ENCODE measurements at regions of chr18 and their contacts with region 1.

Region 1: GRCh38 chr18:47204908-47205522 is 28.9 kb upstream of the IER3IP1 start:
- DNase-seq: peak; percentile 51
- ATAC-seq: no peak
- H3K4me3 ChIP-seq: no peak overlapping the region
- H3K4me3 Mint-ChIP-seq: no peak overlapping the region
- H3K27ac ChIP-seq: no peak overlapping the region
- H3K27ac Mint-ChIP-seq: no peak overlapping the region
- H3K4me1 ChIP-seq: no peaks in the 10 kb centered on the region
- H3K4me1 Mint-ChIP-seq: no peaks in the 10 kb centered on the region
- H3K27me3 ChIP-seq: peaks cover 0 to under 1% (median 0%) of the 10 kb centered on the region in 4 experiments
- H3K27me3 Mint-ChIP-seq: peaks cover 33% of the 10 kb centered on the region
- CTCF ChIP-seq: peak; percentile 76

Region 2: DNA sequence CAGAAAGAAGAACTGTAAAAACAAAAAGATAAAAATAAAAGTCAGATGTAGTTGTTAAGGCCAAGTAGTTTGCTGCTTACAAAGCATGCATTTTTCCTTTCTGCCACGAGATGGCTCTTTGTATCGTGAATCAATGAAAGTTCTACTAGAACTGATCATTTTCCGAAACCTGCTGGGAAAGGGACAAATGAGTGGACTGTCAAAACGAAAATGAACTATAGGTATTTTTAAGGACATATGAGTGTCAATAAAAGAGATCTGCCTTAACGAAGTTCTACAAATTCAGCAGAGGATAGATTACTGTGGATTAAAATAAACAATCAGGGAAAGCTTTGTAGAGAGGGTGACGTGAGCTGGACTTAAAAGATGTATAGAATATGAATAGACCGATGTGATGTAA is 154.5 kb before region 1 on chr18:
- CTCF ChIA-PET with region 1: interaction called, 26 read pairs
- POLR2A ChIA-PET with region 1: no interaction called
- intact Hi-C with region 1: no loop called
- DNase-seq: peak; percentile 32
- ATAC-seq: no peak
- H3K4me3 ChIP-seq: no peak overlapping the region
- H3K4me3 Mint-ChIP-seq: no peak overlapping the region
- H3K27ac ChIP-seq: no peak overlapping the region
- H3K27ac Mint-ChIP-seq: no peak overlapping the region
- H3K4me1 ChIP-seq: no peaks in the 10 kb centered on the region
- H3K4me1 Mint-ChIP-seq: no peaks in the 10 kb centered on the region
- H3K27me3 ChIP-seq: no peaks in the 10 kb centered on the region
- H3K27me3 Mint-ChIP-seq: peaks cover 3% of the 10 kb centered on the region
- CTCF ChIP-seq: peak; percentile 71

Region 3: GRCh38 chr18:47100214-47100831 is 104.7 kb before region 1 on chr18:
- CTCF ChIA-PET with region 1: interaction called, 67 read pairs
- POLR2A ChIA-PET with region 1: no interaction called
- intact Hi-C with region 1: loop called (anchors 1 kb)
- DNase-seq: peak; percentile 60
- ATAC-seq: peak; percentile 33
- H3K4me3 ChIP-seq: no peak overlapping the region
- H3K4me3 Mint-ChIP-seq: no peak overlapping the region
- H3K27ac ChIP-seq: no peak overlapping the region
- H3K27ac Mint-ChIP-seq: no peak overlapping the region
- H3K4me1 ChIP-seq: no peaks in the 10 kb centered on the region
- H3K4me1 Mint-ChIP-seq: peaks cover 4% of the 10 kb centered on the region
- H3K27me3 ChIP-seq: no peaks in the 10 kb centered on the region
- H3K27me3 Mint-ChIP-seq: no peaks in the 10 kb centered on the region
- CTCF ChIP-seq: peak; percentile 81

Region 4: GRCh38 chr18:47191961-47192360 is 13.1 kb before region 1 on chr18:
- CTCF ChIA-PET with region 1: interaction called, 16 read pairs
- POLR2A ChIA-PET with region 1: no interaction called
- intact Hi-C with region 1: no loop called
- DNase-seq: no peak
- ATAC-seq: no peak
- H3K4me3 ChIP-seq: no peak overlapping the region
- H3K4me3 Mint-ChIP-seq: no peak overlapping the region
- H3K27ac ChIP-seq: no peak overlapping the region
- H3K27ac Mint-ChIP-seq: no peak overlapping the region
- H3K4me1 ChIP-seq: peaks cover 13 to 17% of the 10 kb centered on the region in 2 donors
- H3K4me1 Mint-ChIP-seq: peaks cover 17% of the 10 kb centered on the region
- H3K27me3 ChIP-seq: peaks cover 0 to 4% (median 0%) of the 10 kb centered on the region in 4 experiments
- H3K27me3 Mint-ChIP-seq: peaks cover 10% of the 10 kb centered on the region
- CTCF ChIP-seq: no peak